ENCODE measurements at regions of chr17 and their contacts with region 1.

Region 1: DNA sequence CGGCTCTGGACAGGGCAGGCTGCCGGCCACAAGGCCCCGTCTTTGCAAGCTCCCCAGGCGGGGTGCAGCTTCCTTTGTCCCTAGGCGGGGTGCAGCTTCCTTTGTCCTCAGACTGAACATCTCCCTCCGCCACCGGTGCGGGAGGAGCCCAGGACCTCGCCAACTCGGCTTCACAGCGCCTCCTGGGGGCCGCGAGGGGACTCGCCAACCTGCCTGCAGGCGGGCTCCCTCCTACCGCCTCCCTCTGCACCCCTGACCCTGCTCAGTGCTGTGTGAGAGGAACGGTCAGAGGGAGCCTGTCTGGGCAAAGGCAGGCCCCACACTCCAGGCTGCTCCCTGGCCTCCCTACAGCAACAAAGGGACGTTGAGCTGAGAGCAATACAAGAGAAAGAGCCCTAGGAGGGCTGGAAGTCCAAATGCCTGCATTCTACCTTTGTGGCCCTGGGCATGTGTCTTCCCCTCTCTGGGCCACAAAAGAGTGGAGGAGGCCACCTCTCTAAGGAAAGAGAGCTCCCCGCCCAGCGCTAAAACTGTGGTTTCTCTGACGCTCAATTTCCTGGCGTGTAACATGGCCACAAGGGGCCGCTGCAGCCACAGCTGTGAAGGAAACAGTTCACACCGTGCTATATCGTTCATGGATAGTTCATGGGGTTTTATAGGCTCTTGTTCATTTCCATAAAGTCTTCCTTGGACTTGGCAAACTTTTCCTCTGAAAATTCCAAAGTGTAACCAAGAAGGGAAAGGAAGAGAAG is 20.9 kb upstream of the KRT19 start:
- DNase-seq: peak; percentile 89
- H3K4me3 Mint-ChIP-seq: peak overlapping the region; percentile 25
- H3K27ac Mint-ChIP-seq: peak overlapping the region; percentile 80
- H3K4me1 Mint-ChIP-seq: peaks cover 19% of the 10 kb centered on the region
- H3K27me3 Mint-ChIP-seq: peaks cover 2% of the 10 kb centered on the region

Region 2: DNA sequence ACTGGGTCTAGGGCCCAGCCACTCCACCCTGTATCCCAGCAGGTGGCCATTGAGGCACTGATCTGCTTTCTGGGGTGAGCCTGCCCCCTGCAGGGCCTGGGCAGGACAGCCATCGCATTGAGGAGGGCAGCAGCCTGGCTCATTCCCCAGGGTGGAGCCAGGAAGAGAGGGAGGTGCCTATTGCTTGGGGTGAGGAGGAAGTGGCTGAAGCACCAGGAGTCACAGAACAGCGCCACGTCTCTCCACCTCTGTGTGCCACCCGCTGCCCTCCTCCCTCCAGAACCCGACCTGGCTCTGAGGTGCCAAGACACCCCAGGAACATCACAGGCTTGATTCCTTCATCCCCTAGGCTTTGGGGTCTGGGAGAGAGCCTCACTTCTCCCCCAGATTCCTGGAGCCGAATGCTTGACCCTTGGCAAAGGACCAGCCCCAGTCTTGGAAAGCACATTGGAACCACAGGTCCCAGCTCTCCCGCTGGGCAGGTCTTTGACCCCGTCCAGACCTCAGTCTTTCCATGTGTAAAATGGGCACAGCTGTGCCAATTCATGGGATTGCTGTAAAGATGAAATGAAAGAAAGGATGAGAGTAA is 52.1 kb before region 1 on chr17:
- CTCF ChIA-PET with region 1: interaction called, 11 read pairs
- POLR2A ChIA-PET with region 1: no interaction called
- DNase-seq: peak; percentile 76
- H3K4me3 Mint-ChIP-seq: no peak overlapping the region
- H3K27ac Mint-ChIP-seq: peak overlapping the region; percentile 74
- H3K4me1 Mint-ChIP-seq: peaks cover 13% of the 10 kb centered on the region
- H3K27me3 Mint-ChIP-seq: peaks cover 2% of the 10 kb centered on the region

Region 3: DNA sequence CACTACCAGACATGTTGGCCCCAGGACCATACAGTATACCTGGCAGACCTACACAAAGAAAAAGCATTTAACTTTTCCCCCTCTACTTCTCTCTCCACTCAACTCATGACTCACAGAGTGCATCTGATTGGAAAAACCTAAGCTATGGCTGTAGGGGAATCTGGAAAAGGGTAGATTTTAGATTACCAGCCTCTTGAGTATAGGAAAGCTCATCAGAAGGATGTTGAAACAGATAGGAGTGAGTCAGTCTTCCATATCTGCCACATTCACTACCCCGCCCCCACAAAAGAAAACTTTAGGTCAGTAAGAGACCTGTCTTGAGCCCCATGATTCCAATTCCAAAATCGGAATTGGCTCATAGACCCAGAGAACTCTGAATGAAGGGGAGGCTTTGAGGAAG is 10.5 kb after region 1 on chr17:
- CTCF ChIA-PET with region 1: interaction called, 30 read pairs
- POLR2A ChIA-PET with region 1: no interaction called
- DNase-seq: no peak
- H3K4me3 Mint-ChIP-seq: no peak overlapping the region
- H3K27ac Mint-ChIP-seq: no peak overlapping the region
- H3K4me1 Mint-ChIP-seq: no peaks in the 10 kb centered on the region
- H3K27me3 Mint-ChIP-seq: peaks cover 36% of the 10 kb centered on the region

Region 4: DNA sequence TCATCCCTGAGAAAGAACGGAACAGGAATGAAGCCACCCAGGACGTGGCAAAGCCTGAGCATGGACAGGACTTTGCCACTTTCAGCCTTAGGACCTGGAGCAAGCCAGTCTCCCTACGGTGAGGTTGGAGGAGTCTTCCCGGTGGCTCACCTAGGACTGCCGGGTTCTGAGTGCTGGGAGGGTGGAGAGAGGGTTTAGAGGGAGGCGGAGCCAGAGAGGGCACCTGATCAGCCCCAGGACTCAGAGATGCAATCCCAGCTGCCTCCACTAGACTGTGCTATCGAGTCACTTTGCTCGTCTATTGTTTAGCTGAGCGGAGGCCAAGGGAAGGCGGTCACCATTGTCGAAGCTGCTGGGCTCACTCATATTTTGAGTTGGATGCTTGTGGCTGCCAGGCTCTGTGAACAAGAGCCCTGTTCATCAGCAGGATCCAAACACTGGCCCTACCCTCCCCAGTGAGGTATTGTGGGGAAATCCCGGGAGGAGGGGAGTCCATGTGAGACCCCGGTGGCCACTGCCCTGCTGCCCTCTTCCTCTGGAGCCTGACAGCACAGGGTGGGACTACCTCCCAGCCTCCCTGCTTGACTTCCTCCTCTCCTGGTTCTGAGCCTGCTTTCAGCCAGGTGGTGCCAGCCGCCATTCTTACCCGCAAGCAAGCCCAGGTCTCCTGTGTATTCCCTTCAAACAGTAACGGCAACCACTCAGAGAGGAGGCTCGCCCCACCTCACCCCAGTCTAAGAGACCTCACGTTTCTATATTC is 30.6 kb after region 1 on chr17:
- CTCF ChIA-PET with region 1: interaction called, 18 read pairs
- POLR2A ChIA-PET with region 1: no interaction called
- DNase-seq: peak; percentile 80
- H3K4me3 Mint-ChIP-seq: no peak overlapping the region
- H3K27ac Mint-ChIP-seq: no peak overlapping the region
- H3K4me1 Mint-ChIP-seq: no peaks in the 10 kb centered on the region
- H3K27me3 Mint-ChIP-seq: peaks cover 33% of the 10 kb centered on the region

Region 5: GRCh38 chr17:41665566-41666236 is 116.7 kb after region 1 on chr17:
- CTCF ChIA-PET with region 1: interaction called, 50 read pairs
- POLR2A ChIA-PET with region 1: no interaction called
- DNase-seq: peak; percentile 86
- H3K4me3 Mint-ChIP-seq: peak overlapping the region; percentile 79
- H3K27ac Mint-ChIP-seq: peak overlapping the region; percentile 98
- H3K4me1 Mint-ChIP-seq: peaks cover 42% of the 10 kb centered on the region
- H3K27me3 Mint-ChIP-seq: peaks cover 13% of the 10 kb centered on the region

Measured in activated CD4-positive, alpha-beta T cell treated with anti-CD3 and anti-CD28 coated beads, Interleukin-2, amount 10 ng/mL, durations not matched to agents 7 days and 5 days (primary cell).